PC-9 (cell line): ENCODE measurements at regions of chr2 and their contacts with region 1.

Region 1: GRCh38 chr2:202033321-202034248 is at the start of gene FZD7:
- DNase-seq: peak; percentile 71 to 87
- H3K4me3 ChIP-seq: peak within 1 kb of the TSS; percentile 75
- H3K27ac ChIP-seq: peak within 1 kb of the TSS; percentile 88
- H3K4me1 ChIP-seq: peaks cover 29% of the 10 kb centered on the region
- H3K27me3 ChIP-seq: no peaks in the 10 kb centered on the region
- CTCF ChIP-seq: no peak
- total RNA-seq, gene FZD7: 26.8 and 30.9 TPM in 2 replicates

Region 2: DNA sequence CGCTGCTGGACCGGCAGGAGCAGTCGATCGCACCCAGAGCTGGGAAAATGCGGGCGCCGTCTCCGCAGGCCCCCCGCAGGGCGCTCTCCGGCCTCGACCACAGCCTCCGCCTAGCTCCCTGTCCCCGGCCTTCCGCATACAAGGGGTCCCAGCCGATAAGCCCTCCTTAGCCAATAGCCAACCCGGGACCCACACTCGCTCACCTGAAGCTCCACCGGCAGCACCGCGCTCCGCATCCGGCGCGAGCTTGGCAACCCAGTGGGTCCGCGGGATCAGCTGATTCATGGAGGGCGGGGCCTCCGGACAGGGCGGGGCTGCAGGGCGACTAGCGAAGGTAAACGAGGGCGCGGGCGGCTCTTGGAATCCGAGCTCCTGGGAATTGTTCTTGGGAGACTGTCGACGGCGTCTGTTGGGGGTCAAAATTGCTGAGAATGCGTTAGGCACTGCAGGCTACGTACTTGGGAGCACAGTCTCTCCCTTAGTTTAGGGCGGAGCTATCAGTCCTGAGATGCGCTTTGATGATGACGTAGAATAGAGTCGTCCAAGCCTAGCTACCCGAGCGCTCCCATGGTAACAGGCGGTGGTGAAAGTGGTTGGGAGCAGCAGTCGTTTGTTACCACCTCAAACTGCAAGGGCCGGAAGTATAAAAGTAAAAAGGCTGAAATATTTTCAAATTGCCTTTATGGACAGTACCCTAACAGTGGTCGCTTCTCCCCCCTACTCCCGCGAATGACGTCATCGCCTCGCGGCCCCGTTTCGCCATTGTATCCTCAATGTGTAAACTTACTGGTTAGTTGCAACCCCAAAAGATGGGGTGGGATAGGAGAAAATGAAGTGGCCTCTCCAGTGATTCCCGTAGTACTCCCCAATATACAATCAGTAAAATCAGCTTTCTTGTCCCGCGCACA is 252.7 kb before region 1 on chr2 and contains the start of gene ALS2:
- CTCF ChIA-PET with region 1: no interaction called
- POLR2A ChIA-PET with region 1: no interaction called
- intact Hi-C with region 1: loop called (anchors 5 kb)
- DNase-seq: peak; percentile 97
- H3K4me3 ChIP-seq: peak within 1 kb of the TSS; percentile 80
- H3K27ac ChIP-seq: peak within 1 kb of the TSS; percentile 51
- H3K4me1 ChIP-seq: peaks cover 28% of the 10 kb centered on the region
- H3K27me3 ChIP-seq: no peaks in the 10 kb centered on the region
- CTCF ChIP-seq: no peak
- total RNA-seq, gene ALS2: 27.2 and 27.6 TPM in 2 replicates

Region 3: DNA sequence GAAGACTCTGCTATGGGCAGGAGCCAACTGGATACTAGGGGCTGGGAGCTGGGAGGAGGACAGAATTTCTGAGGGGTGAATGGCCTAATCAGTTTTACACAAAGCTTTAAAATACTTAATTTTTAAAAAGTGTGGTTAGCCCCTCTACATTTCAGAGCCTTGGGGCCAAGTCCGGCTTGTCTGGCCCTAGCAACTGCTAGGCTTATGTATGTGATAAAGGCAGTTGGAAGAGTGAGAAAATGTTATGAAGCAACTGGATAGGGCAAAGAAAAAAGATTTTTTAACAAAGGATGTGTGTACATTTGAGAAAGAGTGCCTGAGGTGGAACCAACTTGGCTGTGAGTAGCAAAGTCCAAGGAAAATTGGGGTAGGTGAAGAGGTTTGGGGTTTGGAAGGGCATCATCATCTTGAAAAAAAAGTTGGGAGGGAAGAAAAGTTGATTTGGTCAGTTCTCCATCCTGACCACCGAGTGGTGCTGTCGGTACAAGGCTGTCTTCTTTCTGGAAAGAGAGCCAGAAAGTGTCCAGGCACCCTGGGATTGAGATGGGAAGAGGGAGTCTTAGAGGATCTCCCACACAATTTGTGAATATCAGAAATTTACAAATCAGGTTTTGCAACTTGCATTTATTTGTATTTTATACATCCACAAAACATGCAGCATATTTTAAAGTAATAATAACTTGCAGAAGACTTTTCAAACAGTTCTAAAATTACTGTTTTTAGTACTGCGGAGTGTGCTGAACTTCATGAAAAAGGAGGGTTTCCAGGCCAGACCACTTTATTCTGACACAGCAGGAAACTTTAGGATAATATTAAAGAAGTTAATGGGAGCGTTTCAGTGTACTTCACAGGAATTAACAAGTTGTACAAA is 237.7 kb before region 1 on chr2:
- CTCF ChIA-PET with region 1: no interaction called
- POLR2A ChIA-PET with region 1: no interaction called
- intact Hi-C with region 1: loop called (anchors 2 kb)
- DNase-seq: no peak
- H3K4me3 ChIP-seq: no peak overlapping the region
- H3K27ac ChIP-seq: no peak overlapping the region
- H3K4me1 ChIP-seq: peaks cover 28% of the 10 kb centered on the region
- H3K27me3 ChIP-seq: no peaks in the 10 kb centered on the region
- CTCF ChIP-seq: peak; percentile 75

Region 4: DNA sequence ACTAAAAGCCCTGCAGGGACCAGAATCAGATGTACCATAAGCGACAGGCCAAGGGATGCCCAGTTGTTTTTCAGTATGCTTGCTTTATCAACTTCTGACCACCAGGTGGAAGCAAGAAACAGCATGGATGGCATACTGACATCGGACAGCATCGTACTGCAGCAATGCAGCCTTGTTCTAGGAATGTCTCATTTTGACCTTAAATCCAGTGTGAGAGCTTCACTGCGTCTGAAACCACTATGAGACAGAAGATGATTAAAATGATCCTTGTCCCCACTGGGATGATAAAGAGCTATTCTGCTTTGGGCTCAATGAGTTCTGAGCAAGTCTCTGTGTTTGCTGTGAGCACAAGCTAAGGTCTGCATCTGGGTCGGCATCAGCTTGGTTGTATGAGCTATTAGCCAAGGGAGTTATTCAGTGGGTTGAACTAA is 172.9 kb before region 1 on chr2:
- CTCF ChIA-PET with region 1: no interaction called
- POLR2A ChIA-PET with region 1: no interaction called
- intact Hi-C with region 1: loop called (anchors 2 kb)
- DNase-seq: peak; percentile 54 to 57
- H3K4me3 ChIP-seq: no peak overlapping the region
- H3K27ac ChIP-seq: no peak overlapping the region
- H3K4me1 ChIP-seq: peaks cover under 1% of the 10 kb centered on the region; the same call in 1 of the 2 replicates
- H3K27me3 ChIP-seq: no peaks in the 10 kb centered on the region
- CTCF ChIP-seq: peak; percentile 86

Region 5: GRCh38 chr2:201890457-201890856 is 143.1 kb before region 1 on chr2:
- CTCF ChIA-PET with region 1: no interaction called
- POLR2A ChIA-PET with region 1: no interaction called
- intact Hi-C with region 1: loop called (anchors 10 kb)
- DNase-seq: peak in 1 of 2 experiments; percentile 87
- H3K4me3 ChIP-seq: no peak overlapping the region
- H3K27ac ChIP-seq: peak overlapping the region; percentile 56
- H3K4me1 ChIP-seq: peaks cover 32% of the 10 kb centered on the region
- H3K27me3 ChIP-seq: no peaks in the 10 kb centered on the region
- CTCF ChIP-seq: no peak

Region 6: GRCh38 chr2:202178342-202178958 is 144.9 kb after region 1 on chr2:
- CTCF ChIA-PET with region 1: no interaction called
- POLR2A ChIA-PET with region 1: no interaction called
- intact Hi-C with region 1: loop called (anchors 2 kb)
- DNase-seq: peak in 1 of 2 experiments; percentile 29
- H3K4me3 ChIP-seq: no peak overlapping the region
- H3K27ac ChIP-seq: no peak overlapping the region
- H3K4me1 ChIP-seq: no peaks in the 10 kb centered on the region
- H3K27me3 ChIP-seq: no peaks in the 10 kb centered on the region
- CTCF ChIP-seq: peak; percentile 84

Region 7: GRCh38 chr2:202375609-202376408 is 342.2 kb after region 1 on chr2 and contains the start of gene BMPR2:
- CTCF ChIA-PET with region 1: no interaction called
- POLR2A ChIA-PET with region 1: no interaction called
- intact Hi-C with region 1: loop called (anchors 10 kb)
- DNase-seq: peak; percentile 64 to 90
- H3K4me3 ChIP-seq: peak within 1 kb of the TSS; percentile 85
- H3K27ac ChIP-seq: peak within 1 kb of the TSS; percentile 77
- H3K4me1 ChIP-seq: peaks cover 22% of the 10 kb centered on the region; the same call in 1 of the 2 replicates
- H3K27me3 ChIP-seq: no peaks in the 10 kb centered on the region
- CTCF ChIP-seq: no peak
- total RNA-seq, gene BMPR2: 17.6 and 23.2 TPM in 2 replicates